AG04449 (cell line): ENCODE measurements at regions of chr22 and their contacts with region 1.

Region 1: DNA sequence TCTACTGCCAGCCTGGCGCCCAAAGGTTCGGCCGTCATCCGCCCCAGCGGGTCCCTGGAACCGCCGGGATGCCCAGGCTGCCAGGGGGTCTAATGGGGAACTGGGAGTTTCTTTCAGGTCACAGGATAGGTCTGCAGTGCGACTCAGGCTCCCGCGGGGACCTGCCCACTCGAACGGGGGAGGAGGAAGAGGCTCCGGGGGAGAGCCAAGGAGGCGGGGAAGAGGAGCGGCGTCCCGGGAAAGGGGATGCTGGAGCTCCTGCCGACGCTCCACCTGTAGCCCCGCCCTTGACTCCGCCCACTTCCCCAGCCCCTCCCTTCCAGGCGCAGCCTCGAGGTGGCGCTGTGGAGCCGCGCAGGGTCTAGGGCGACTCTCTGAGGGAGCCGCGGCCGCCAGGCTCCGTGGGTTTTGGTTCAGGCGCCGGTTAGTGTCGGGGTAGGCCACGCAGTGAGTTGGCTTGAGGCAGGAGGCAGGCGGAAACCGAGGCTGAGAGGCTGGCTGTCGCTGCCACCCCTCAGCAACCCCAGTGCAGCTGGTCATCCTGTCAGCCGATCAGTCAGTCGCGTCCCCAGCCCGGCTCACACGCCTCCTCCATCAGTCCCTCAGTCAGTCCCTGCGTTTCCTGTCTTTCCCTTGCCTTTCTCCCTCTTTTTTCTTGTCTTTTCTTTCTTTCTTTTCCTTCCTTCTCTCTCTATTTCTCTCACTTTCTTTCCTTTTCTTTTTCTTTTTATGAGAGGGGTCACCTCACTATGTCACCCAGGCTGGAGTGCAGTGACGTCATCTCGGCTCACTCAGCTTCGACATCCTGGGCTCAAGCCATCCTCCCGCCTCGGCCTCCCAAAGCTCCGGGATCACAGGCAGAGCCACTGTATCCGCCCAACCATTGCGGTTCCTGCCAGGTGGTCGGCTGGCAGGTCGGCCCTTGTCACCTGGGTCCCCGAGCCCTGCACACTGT is 26.4 kb downstream of the YWHAH start:
- DNase-seq: no peak
- H3K4me3 ChIP-seq: peak overlapping the region; percentile 61
- CTCF ChIP-seq: peak; percentile 98

Region 2: GRCh38 chr22:31676700-31677099 is 294.1 kb before region 1 on chr22:
- CTCF ChIA-PET with region 1: interaction called, 12 read pairs
- POLR2A ChIA-PET with region 1: no interaction called
- DNase-seq: no peak
- H3K4me3 ChIP-seq: peak overlapping the region; percentile 49
- CTCF ChIP-seq: no peak

Region 3: GRCh38 chr22:31952459-31952858 is 18.3 kb before region 1 on chr22:
- CTCF ChIA-PET with region 1: interaction called, 89 read pairs
- POLR2A ChIA-PET with region 1: interaction called, 3 read pairs
- DNase-seq: peak; percentile 67
- H3K4me3 ChIP-seq: no peak overlapping the region
- CTCF ChIP-seq: no peak

Region 4: DNA sequence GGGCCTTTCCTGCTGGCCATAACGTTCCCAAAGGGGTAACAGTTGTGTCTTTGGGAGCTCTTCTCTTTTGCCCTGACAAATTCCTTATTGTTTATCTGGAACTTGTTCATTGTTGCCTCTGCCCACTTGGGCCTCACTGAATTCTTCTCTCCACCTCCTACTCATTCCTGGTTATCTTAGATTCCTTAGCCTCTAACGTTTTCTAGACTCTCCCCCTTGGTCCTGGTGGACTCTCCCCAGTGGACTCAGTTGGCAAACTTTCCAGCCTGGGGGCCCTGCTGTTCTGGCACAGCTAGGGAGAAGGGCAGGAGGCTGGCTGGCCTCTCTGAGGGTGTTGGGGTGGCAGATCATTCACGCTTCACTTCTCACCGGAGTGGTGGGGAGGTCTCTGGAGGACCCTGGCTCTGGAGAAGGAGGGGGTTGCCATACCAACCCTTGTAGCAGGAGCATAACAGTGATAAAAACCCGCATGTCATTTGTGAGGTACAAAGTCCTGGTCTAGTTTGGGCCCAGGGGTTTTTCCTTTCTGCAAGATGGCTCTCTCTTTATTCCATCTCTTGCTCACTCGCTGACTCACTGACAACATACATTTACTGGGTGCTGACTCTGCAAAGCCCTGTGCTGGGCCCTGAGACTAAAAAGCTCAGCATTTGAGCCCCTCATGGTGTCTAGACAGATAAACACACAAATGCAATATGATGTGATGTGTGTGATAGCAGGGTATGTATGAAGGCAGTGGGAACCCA is 13.3 kb after region 1 on chr22:
- CTCF ChIA-PET with region 1: interaction called, 11 read pairs
- POLR2A ChIA-PET with region 1: no interaction called
- DNase-seq: no peak
- H3K4me3 ChIP-seq: no peak overlapping the region
- CTCF ChIP-seq: no peak

Region 5: GRCh38 chr22:32080904-32081303 is 110.1 kb after region 1 on chr22:
- CTCF ChIA-PET with region 1: interaction called, 175 read pairs
- POLR2A ChIA-PET with region 1: no interaction called
- DNase-seq: no peak
- H3K4me3 ChIP-seq: no peak overlapping the region
- CTCF ChIP-seq: peak; percentile 57

Region 6: GRCh38 chr22:32097018-32097417 is 126.3 kb after region 1 on chr22:
- CTCF ChIA-PET with region 1: no interaction called
- POLR2A ChIA-PET with region 1: no interaction called
- DNase-seq: no peak
- H3K4me3 ChIP-seq: no peak overlapping the region
- CTCF ChIP-seq: no peak

Region 7: DNA sequence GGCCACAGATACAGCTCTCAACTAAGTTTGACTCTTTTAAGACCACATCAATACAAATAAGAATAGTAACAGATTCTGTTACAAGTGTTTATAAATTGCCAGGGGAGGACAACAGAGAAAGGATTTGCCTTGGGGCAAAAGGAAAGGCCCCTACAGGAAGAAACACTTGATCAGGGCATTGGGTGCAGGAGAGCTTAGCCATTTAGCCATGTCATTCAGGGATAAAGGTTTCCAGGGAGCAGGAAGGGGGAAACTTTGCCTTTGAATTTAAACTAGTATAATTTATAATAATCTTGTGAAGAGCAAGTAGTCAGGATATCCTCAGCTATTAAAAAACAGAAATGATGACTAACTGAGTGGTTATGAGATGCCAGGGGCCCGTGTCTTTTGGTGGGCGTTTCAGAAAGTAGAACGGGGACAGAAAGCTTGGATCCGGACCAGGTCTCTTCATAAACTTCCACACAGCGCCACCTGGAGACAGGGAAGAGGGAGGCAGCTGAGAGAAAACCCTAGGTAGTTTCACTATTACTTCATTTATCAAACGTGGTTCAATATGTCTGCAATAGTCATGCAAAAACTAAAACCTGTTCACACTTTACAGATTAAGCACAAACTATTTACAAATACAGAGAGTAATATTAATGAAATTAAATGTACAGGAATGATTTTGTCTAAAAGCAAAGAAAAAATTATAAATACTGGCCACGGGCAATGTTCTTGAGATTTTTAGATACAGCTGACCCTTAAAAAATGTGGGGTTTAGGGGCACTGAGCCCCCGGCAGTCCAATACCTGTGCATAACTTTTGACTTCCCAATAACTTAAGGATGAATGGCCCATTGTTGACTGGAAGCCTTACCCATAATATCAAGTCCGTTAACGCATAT is 295.4 kb after region 1 on chr22:
- CTCF ChIA-PET with region 1: interaction called, 104 read pairs
- POLR2A ChIA-PET with region 1: no interaction called
- DNase-seq: peak; percentile 3
- H3K4me3 ChIP-seq: no peak overlapping the region
- CTCF ChIP-seq: peak; percentile 79

Region 8: GRCh38 chr22:32354360-32355351 is 383.9 kb after region 1 on chr22:
- CTCF ChIA-PET with region 1: no interaction called
- POLR2A ChIA-PET with region 1: no interaction called
- DNase-seq: no peak
- H3K4me3 ChIP-seq: no peak overlapping the region
- CTCF ChIP-seq: no peak